Activated naive CD4-positive, alpha-beta T cell treated with anti-CD3 and anti-CD28 coated beads for 36 hours (primary cell): ENCODE measurements at regions of chr6 and their contacts with region 1.

Region 1: GRCh38 chr6:142946181-142946923 is 1.4 kb upstream of the HIVEP2 start:
- DNase-seq: peak; percentile 97
- H3K4me3 Mint-ChIP-seq: peak overlapping the region; percentile 99
- H3K27ac Mint-ChIP-seq: peak overlapping the region; percentile 98
- H3K4me1 Mint-ChIP-seq: peaks cover 29% of the 10 kb centered on the region
- H3K27me3 Mint-ChIP-seq: no peaks in the 10 kb centered on the region

Region 2: DNA sequence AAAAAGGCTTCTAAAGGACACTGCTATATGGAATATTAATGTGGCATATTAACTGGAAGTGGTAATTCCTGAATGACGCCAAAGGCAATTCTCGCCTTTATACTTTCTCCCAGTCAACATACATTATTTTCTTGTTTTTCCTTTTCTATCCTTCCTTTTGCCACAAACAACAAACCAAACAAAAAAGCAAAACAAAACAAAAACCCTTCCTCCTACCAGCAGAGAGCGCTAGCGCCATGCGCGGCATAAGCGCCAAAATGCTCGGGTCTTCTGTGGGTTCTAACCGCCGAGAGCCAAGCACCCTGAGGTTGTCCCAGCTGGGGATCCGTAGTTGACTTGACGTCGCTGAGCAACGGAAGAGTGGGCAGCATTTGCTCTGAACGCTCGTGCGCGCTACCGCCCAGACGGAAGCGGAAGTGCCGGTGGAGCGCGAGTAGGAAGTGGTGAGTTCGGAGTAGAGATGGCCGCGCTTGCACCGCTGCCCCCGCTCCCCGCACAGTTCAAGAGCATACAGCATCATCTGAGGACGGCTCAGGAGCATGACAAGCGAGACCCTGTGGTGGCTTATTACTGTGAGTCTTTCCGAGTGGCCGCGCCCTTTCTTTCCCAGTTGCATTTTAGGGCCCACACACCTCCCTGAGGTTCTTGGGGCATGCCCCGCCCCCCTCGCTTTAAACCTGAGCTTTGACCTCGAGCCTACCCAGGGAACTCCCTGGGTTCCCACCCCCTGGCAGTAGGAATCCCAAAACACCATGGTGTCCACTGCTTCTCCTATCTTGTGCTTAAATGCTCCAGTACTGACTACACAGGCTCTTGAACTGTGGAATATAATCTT is 799.3 kb before region 1 on chr6 and contains the starts of genes NMBR and VTA1:
- CTCF ChIA-PET with region 1: no interaction called
- intact Hi-C with region 1: loop called (anchors 2 kb)
- DNase-seq: peak; percentile 98
- H3K4me3 Mint-ChIP-seq: peak within 1 kb of the TSS; percentile 93
- H3K27ac Mint-ChIP-seq: peak within 1 kb of the TSS; percentile 91
- H3K4me1 Mint-ChIP-seq: peaks cover 53% of the 10 kb centered on the region
- H3K27me3 Mint-ChIP-seq: no peaks in the 10 kb centered on the region
- total RNA-seq, gene NMBR: not detected
- total RNA-seq, gene VTA1: 54.7 to 57.3 TPM

Region 3: DNA sequence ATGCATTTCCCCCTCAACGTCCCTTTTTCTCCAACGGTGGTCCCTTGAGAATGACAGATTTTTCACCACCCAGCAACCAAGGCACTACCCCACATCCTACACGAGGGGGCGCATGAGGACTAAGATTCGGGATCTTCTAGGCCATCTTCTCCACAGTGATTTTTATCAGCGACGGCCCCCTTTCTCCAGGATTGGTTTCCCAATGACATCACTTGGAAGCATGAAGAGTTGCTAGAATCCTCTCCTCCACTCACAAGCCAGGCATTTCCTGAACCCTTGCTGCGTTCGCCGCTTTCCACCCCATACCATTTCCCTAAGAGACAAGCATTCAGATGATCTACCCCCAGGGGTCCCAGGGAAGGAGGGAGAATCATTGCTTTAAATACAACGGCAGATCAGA is 253.4 kb before region 1 on chr6:
- CTCF ChIA-PET with region 1: interaction called, 3 read pairs
- intact Hi-C with region 1: loop called (anchors 1 kb)
- DNase-seq: peak; percentile 81
- H3K4me3 Mint-ChIP-seq: no peak overlapping the region
- H3K27ac Mint-ChIP-seq: peak overlapping the region; percentile 63
- H3K4me1 Mint-ChIP-seq: peaks cover 22% of the 10 kb centered on the region
- H3K27me3 Mint-ChIP-seq: no peaks in the 10 kb centered on the region

Region 4: DNA sequence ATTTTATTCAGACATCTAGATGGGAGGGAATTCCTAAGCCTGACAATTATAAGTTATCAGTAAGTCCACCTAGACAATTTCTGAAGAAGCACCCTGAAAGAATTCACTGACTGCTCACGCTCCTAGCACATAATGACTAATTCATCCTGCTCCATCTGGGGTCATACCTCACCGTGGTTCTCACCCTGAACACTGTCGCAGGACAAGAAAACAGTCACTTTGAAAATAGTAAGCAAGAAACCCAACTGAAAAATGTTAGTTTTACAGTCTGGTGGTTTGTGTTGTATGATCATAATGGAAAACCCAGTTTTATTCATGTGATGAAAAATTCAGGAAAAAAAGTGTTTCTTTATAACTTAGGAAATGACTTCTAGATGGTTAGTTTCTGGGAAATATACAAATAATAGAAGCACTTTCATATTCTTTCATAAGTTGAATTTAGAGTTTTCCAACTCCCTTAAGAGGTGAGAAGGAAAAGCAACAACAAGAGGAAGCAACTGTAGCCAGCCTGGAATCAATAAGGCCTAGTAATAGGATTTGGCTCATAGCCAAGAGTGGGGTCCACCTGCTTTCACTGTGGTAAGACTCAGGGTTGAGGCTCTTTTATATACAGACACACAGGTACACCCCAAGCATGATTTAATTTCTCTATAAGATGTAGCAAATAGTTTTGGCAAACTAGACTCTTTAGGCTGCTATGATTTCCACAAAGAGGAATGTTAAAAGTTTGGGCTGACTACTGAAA is 95.5 kb before region 1 on chr6:
- CTCF ChIA-PET with region 1: interaction called, 3 read pairs
- intact Hi-C with region 1: loop called (anchors 1 kb)
- DNase-seq: peak; percentile 62
- H3K4me3 Mint-ChIP-seq: peak overlapping the region; percentile 39
- H3K27ac Mint-ChIP-seq: peak overlapping the region; percentile 91
- H3K4me1 Mint-ChIP-seq: peaks cover 97% of the 10 kb centered on the region
- H3K27me3 Mint-ChIP-seq: no peaks in the 10 kb centered on the region

Region 5: GRCh38 chr6:142913511-142914047 is 32.8 kb before region 1 on chr6:
- CTCF ChIA-PET with region 1: interaction called, 3 read pairs
- intact Hi-C with region 1: loop called (anchors 1 kb)
- DNase-seq: peak; percentile 82
- H3K4me3 Mint-ChIP-seq: peak overlapping the region; percentile 64
- H3K27ac Mint-ChIP-seq: peak overlapping the region; percentile 96
- H3K4me1 Mint-ChIP-seq: peaks cover 84% of the 10 kb centered on the region
- H3K27me3 Mint-ChIP-seq: no peaks in the 10 kb centered on the region

Region 6: DNA sequence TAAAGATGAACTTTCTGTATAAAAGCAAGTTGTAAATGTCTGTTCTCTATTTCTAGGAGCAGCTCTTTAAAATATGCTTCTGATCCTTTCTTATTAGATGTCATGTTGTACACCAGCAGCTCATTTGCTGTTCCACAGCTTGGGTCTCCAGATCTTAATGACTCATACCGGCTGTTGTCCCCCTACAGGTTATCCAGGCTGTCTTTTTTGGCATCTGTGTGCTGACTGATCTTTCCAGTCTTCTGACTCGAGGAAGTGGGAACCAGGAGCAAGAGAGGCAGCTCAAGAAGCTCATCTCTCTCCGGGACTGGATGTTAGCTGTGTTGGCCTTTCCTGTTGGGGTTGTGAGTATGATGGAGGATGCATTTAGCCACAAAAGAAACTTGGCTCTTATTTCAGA is 190.3 kb after region 1 on chr6:
- CTCF ChIA-PET with region 1: no interaction called
- intact Hi-C with region 1: loop called (anchors 5 kb)
- DNase-seq: no peak
- H3K4me3 Mint-ChIP-seq: no peak overlapping the region
- H3K27ac Mint-ChIP-seq: peak overlapping the region; percentile 62
- H3K4me1 Mint-ChIP-seq: peaks cover 51% of the 10 kb centered on the region
- H3K27me3 Mint-ChIP-seq: no peaks in the 10 kb centered on the region

Region 7: DNA sequence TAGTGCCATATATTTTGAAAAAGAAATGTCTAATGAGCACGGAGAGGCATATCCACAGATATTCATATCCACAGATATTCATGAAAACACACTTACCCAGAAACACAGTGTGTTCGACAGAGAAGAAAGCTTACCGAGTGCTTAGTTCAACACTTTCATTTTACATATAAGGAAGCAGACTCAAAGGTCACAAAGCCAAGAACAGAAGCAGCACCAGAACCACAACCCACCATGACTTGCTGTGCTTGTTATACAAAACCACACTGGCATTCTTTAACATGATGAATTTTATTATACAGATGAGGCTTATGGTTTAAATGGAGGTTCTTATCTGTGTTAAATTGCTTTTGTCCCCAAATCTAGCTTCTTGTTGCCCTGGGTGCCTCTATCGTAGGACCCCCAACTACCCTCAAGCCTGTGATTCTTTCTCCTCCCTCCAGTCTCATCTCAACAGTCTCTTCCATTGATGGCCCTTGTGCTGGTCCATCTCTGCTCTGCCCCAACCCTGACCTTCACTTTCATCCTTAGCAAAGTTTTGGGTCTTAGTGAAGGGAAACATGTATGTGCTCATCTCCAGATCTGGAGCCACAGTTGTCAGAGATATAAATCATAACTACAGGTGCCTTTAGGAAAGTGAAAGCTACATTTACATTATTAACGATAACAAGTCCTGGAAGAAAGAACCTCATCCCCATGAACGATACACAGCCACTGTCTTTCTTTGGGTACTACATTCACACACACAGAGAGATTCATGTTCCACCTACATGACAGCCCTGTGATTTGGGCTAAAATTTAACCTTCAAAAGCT is 1109.0 kb after region 1 on chr6:
- CTCF ChIA-PET with region 1: no interaction called
- intact Hi-C with region 1: loop called (anchors 1 kb)
- DNase-seq: peak; percentile 70
- H3K4me3 Mint-ChIP-seq: peak overlapping the region; percentile 76
- H3K27ac Mint-ChIP-seq: peak overlapping the region; percentile 91
- H3K4me1 Mint-ChIP-seq: peaks cover 26% of the 10 kb centered on the region
- H3K27me3 Mint-ChIP-seq: no peaks in the 10 kb centered on the region